Naive thymus-derived CD4-positive, alpha-beta T cell (primary cell): ENCODE measurements at regions of chr6 and their contacts with region 1.

Region 1: GRCh38 chr6:132813173-132813856 is 1.1 kb upstream of the RPS12 start:
- DNase-seq: peak in 8 of 9 donors; percentile 31 to 71 (median 62)
- ATAC-seq: no peak
- H3K4me3 ChIP-seq: peak overlapping the region; percentile 90
- H3K4me3 Mint-ChIP-seq: peak overlapping the region; percentile 91 to 100 (median 98)
- H3K27ac ChIP-seq: peak overlapping the region; percentile 80
- H3K27ac Mint-ChIP-seq: peak overlapping the region; percentile 95 to 100 (median 98)
- H3K4me1 ChIP-seq: peaks cover 23 to 26% of the 10 kb centered on the region in 2 donors
- H3K4me1 Mint-ChIP-seq: peaks cover 29 to 54% (median 43%) of the 10 kb centered on the region in 7 donors
- H3K27me3 ChIP-seq: no peaks in the 10 kb centered on the region
- H3K27me3 Mint-ChIP-seq: peaks cover 0 to 30% (median 0%) of the 10 kb centered on the region in 5 donors

Region 2: GRCh38 chr6:132202574-132202973 is 610.7 kb before region 1 on chr6:
- CTCF ChIA-PET with region 1: no interaction called
- POLR2A ChIA-PET with region 1: no interaction called
- intact Hi-C with region 1: no loop called
- DNase-seq: no peak
- ATAC-seq: no peak
- H3K4me3 ChIP-seq: no peak overlapping the region
- H3K4me3 Mint-ChIP-seq: no peak overlapping the region
- H3K27ac ChIP-seq: no peak overlapping the region
- H3K27ac Mint-ChIP-seq: no peak overlapping the region
- H3K4me1 ChIP-seq: no peaks in the 10 kb centered on the region
- H3K4me1 Mint-ChIP-seq: no peaks in the 10 kb centered on the region
- H3K27me3 ChIP-seq: no peaks in the 10 kb centered on the region
- H3K27me3 Mint-ChIP-seq: peaks cover 0 to 20% (median 3%) of the 10 kb centered on the region in 5 donors

Region 3: GRCh38 chr6:132768051-132768517 is 45.2 kb before region 1 on chr6:
- CTCF ChIA-PET with region 1: interaction called, 3 read pairs
- POLR2A ChIA-PET with region 1: interaction called, 116 read pairs
- intact Hi-C with region 1: loop called (anchors 1 to 2 kb)
- DNase-seq: peak in 6 of 9 donors; percentile 7 to 23 (median 11)
- ATAC-seq: peak; percentile 79
- H3K4me3 ChIP-seq: no peak overlapping the region
- H3K4me3 Mint-ChIP-seq: no peak overlapping the region
- H3K27ac ChIP-seq: no peak overlapping the region
- H3K27ac Mint-ChIP-seq: peak overlapping the region in 2 of 9 donors; percentile 14 to 40
- H3K4me1 ChIP-seq: peaks cover 8 to 9% of the 10 kb centered on the region in 2 donors
- H3K4me1 Mint-ChIP-seq: peaks cover 13 to 20% (median 15%) of the 10 kb centered on the region in 7 donors
- H3K27me3 ChIP-seq: no peaks in the 10 kb centered on the region
- H3K27me3 Mint-ChIP-seq: peaks cover 0 to 2% (median 0%) of the 10 kb centered on the region in 5 donors

Region 4: DNA sequence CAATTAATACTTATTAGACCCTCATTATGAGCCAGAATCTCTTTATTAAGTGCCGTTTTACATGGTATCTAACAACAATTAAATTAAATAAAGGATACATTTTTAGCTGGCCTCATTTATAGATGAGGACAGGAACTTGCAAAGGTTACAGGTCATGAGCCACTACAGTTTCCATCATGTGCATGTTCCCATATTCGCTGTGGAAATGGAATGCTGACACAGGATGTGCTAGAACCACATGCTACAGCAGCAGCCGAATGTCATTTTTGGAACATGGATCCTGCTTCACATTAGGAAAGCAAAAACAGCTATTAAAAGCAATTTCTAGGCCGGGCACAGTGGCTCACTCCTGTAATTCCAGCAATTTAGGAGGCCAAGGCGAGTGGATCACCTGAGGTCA is 20.8 kb before region 1 on chr6:
- CTCF ChIA-PET with region 1: interaction called, 3 read pairs
- POLR2A ChIA-PET with region 1: interaction called, 140 read pairs
- intact Hi-C with region 1: no loop called
- DNase-seq: no peak
- ATAC-seq: no peak
- H3K4me3 ChIP-seq: no peak overlapping the region
- H3K4me3 Mint-ChIP-seq: no peak overlapping the region
- H3K27ac ChIP-seq: no peak overlapping the region
- H3K27ac Mint-ChIP-seq: peak overlapping the region in 1 of 9 donors; percentile 51
- H3K4me1 ChIP-seq: no peaks in the 10 kb centered on the region
- H3K4me1 Mint-ChIP-seq: peaks cover 7 to 49% (median 41%) of the 10 kb centered on the region in 7 donors
- H3K27me3 ChIP-seq: no peaks in the 10 kb centered on the region
- H3K27me3 Mint-ChIP-seq: no peaks in the 10 kb centered on the region

Region 5: GRCh38 chr6:132798869-132799538 is 14.3 kb before region 1 on chr6:
- CTCF ChIA-PET with region 1: interaction called, 26 read pairs
- POLR2A ChIA-PET with region 1: interaction called, 140 read pairs
- intact Hi-C with region 1: loop called (anchors 1 kb)
- DNase-seq: peak; percentile 35 to 70 (median 64)
- ATAC-seq: peak; percentile 91
- H3K4me3 ChIP-seq: no peak overlapping the region
- H3K4me3 Mint-ChIP-seq: no peak overlapping the region
- H3K27ac ChIP-seq: no peak overlapping the region
- H3K27ac Mint-ChIP-seq: peak overlapping the region in 1 of 9 donors; percentile 87
- H3K4me1 ChIP-seq: no peaks in the 10 kb centered on the region
- H3K4me1 Mint-ChIP-seq: peaks cover 6 to 49% (median 40%) of the 10 kb centered on the region in 7 donors
- H3K27me3 ChIP-seq: no peaks in the 10 kb centered on the region
- H3K27me3 Mint-ChIP-seq: peaks cover 0 to 12% (median 0%) of the 10 kb centered on the region in 5 donors